ENCODE measurements at regions of chr7 and their contacts with region 1.

Region 1: GRCh38 chr7:39580149-39580874 is 14.1 kb downstream of the YAE1 start:
- DNase-seq: peak; percentile 91
- ATAC-seq: peak; percentile 95
- H3K4me3 ChIP-seq: no peak overlapping the region
- H3K27ac ChIP-seq: no peak overlapping the region
- H3K4me1 ChIP-seq: no peaks in the 10 kb centered on the region
- H3K27me3 ChIP-seq: no peaks in the 10 kb centered on the region
- CTCF ChIP-seq: peak; percentile 89

Region 2: GRCh38 chr7:39051707-39052106 is 528.6 kb before region 1 on chr7:
- CTCF ChIA-PET with region 1: no interaction called
- POLR2A ChIA-PET with region 1: no interaction called
- intact Hi-C with region 1: no loop called
- DNase-seq: no peak
- ATAC-seq: no peak
- H3K4me3 ChIP-seq: no peak overlapping the region
- H3K27ac ChIP-seq: no peak overlapping the region
- H3K4me1 ChIP-seq: no peaks in the 10 kb centered on the region
- H3K27me3 ChIP-seq: no peaks in the 10 kb centered on the region; the same call in 1 of the 2 replicates
- CTCF ChIP-seq: no peak

Region 3: DNA sequence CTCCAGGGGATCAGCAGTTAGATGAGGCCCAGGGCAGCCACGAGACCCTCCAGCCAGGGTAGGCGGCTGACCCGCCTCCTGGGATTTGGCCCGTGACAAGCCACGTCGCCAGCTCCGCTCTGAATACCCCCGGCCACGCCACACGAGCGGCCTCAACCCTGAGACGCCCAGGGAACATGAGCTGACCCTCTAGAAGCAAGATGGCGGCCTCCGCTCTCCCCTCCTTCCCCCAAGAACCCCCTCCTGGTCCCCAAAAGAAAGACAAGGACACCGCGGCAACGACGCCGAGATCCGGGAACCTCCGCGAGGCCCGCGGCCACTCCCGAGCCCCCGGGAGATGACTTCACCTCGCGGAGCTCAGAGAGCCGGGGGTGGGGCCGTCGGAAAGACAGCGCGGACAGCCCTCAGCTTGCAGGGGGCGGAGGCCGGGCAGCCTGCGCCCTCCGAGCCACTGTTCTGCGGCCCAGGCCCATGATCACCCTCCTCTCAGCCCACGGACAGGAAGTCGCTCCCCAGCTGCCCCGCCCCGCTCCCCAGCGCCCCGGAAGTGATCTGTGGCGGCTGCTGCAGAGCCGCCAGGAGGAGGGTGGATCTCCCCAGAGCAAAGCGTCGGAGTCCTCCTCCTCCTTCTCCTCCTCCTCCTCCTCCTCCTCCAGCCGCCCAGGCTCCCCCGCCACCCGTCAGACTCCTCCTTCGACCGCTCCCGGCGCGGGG is 42.9 kb after region 1 on chr7 and contains the start of gene RALA:
- CTCF ChIA-PET with region 1: interaction called, 10 read pairs
- POLR2A ChIA-PET with region 1: interaction called, 4 read pairs
- intact Hi-C with region 1: loop called (anchors 2 kb)
- DNase-seq: peak; percentile 87
- ATAC-seq: peak; percentile 92
- H3K4me3 ChIP-seq: peak within 1 kb of the TSS; percentile 83
- H3K27ac ChIP-seq: peak within 1 kb of the TSS; percentile 75
- H3K4me1 ChIP-seq: peaks cover 50% of the 10 kb centered on the region
- H3K27me3 ChIP-seq: no peaks in the 10 kb centered on the region
- CTCF ChIP-seq: no peak
- total RNA-seq, gene RALA: 7.5 and 12.9 TPM in 2 replicates

Region 4: GRCh38 chr7:39688611-39689480 is 108.5 kb after region 1 on chr7:
- CTCF ChIA-PET with region 1: no interaction called
- POLR2A ChIA-PET with region 1: no interaction called
- intact Hi-C with region 1: loop called (anchors 5 kb)
- DNase-seq: peak; percentile 49
- ATAC-seq: peak; percentile 78
- H3K4me3 ChIP-seq: no peak overlapping the region
- H3K27ac ChIP-seq: no peak overlapping the region
- H3K4me1 ChIP-seq: peaks cover 24% of the 10 kb centered on the region
- H3K27me3 ChIP-seq: no peaks in the 10 kb centered on the region
- CTCF ChIP-seq: no peak

Region 5: GRCh38 chr7:39746103-39746819 is 165.9 kb after region 1 on chr7:
- CTCF ChIA-PET with region 1: interaction called, 52 read pairs
- POLR2A ChIA-PET with region 1: interaction called, 3 read pairs
- intact Hi-C with region 1: loop called (anchors 1 kb)
- DNase-seq: peak; percentile 79
- ATAC-seq: peak; percentile 88
- H3K4me3 ChIP-seq: no peak overlapping the region
- H3K27ac ChIP-seq: no peak overlapping the region
- H3K4me1 ChIP-seq: no peaks in the 10 kb centered on the region
- H3K27me3 ChIP-seq: no peaks in the 10 kb centered on the region
- CTCF ChIP-seq: peak; percentile 85

Region 6: GRCh38 chr7:39838326-39838725 is 258.0 kb after region 1 on chr7:
- CTCF ChIA-PET with region 1: no interaction called
- POLR2A ChIA-PET with region 1: no interaction called
- intact Hi-C with region 1: loop called (anchors 10 kb)
- DNase-seq: peak; percentile 31
- ATAC-seq: no peak
- H3K4me3 ChIP-seq: no peak overlapping the region
- H3K27ac ChIP-seq: no peak overlapping the region
- H3K4me1 ChIP-seq: no peaks in the 10 kb centered on the region; the same call in 1 of the 2 replicates
- H3K27me3 ChIP-seq: no peaks in the 10 kb centered on the region
- CTCF ChIP-seq: no peak

Region 7: GRCh38 chr7:40057292-40057691 is 477.0 kb after region 1 on chr7:
- CTCF ChIA-PET with region 1: no interaction called
- POLR2A ChIA-PET with region 1: no interaction called
- intact Hi-C with region 1: loop called (anchors 5 kb)
- DNase-seq: no peak
- ATAC-seq: no peak
- H3K4me3 ChIP-seq: no peak overlapping the region
- H3K27ac ChIP-seq: no peak overlapping the region
- H3K4me1 ChIP-seq: no peaks in the 10 kb centered on the region
- H3K27me3 ChIP-seq: no peaks in the 10 kb centered on the region
- CTCF ChIP-seq: no peak